ENCODE measurements at regions of chr2 and their contacts with region 1.

Region 1: DNA sequence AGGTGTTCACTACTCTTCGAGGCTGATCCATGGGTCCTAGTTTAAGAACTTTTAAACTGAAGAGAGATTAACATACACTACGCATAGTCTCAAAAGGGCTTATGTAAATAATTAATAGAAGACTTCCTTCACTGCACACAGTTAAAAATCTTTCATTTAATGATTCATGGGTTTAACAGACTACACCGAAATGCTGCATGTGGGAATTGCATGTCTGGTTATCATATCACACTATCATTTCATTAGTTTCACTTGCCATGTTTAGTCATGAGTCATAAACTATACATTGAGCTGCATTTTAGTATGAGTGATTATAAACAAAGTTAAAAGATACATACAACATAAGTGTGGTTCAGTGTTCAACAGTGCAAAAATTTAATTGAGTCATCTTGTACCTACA is 31.2 kb downstream of the GLS start:
- DNase-seq: no peak
- H3K4me3 Mint-ChIP-seq: peak overlapping the region; percentile 9
- H3K27ac Mint-ChIP-seq: peak overlapping the region; percentile 74
- H3K4me1 Mint-ChIP-seq: peaks cover 25% of the 10 kb centered on the region
- H3K27me3 Mint-ChIP-seq: no peaks in the 10 kb centered on the region

Region 2: DNA sequence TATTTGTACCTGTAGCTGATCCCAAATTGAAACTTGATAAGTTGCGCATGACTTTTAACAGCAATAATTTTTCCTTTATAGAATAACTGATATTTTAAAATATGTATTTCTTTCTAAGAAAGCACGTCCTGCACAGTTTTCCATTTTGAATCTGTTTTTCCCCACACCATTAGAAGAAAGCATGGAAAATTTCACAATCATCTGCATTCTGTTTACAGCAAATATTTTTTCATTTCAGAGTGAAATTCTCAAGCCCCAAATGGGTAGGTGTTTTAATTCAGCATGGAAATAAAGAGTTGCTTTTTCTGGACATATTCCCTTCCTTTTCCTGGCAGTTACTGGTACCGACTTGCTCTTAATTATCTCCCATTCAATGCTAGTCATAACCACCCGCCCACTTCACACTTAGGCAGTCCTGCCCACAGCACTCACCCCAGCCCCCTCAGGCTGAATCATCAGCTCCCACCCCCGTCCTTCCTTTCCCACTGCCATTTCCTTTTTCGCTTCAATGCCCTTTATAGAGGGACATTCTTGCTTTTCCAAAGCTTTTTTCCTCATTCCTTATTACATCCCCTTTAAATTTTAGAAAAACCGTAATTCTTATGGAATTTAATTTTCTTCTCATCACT is 120.4 kb before region 1 on chr2:
- intact Hi-C with region 1: loop called (anchors 5 kb)
- DNase-seq: no peak
- H3K4me3 Mint-ChIP-seq: peak overlapping the region; percentile 53
- H3K27ac Mint-ChIP-seq: peak overlapping the region; percentile 86
- H3K4me1 Mint-ChIP-seq: peaks cover 66% of the 10 kb centered on the region
- H3K27me3 Mint-ChIP-seq: no peaks in the 10 kb centered on the region

Region 3: GRCh38 chr2:190843874-190844699 is 67.7 kb before region 1 on chr2:
- intact Hi-C with region 1: loop called (anchors 2 kb)
- DNase-seq: peak; percentile 72
- H3K4me3 Mint-ChIP-seq: peak overlapping the region; percentile 60
- H3K27ac Mint-ChIP-seq: peak overlapping the region; percentile 87
- H3K4me1 Mint-ChIP-seq: peaks cover 25% of the 10 kb centered on the region
- H3K27me3 Mint-ChIP-seq: no peaks in the 10 kb centered on the region

Region 4: DNA sequence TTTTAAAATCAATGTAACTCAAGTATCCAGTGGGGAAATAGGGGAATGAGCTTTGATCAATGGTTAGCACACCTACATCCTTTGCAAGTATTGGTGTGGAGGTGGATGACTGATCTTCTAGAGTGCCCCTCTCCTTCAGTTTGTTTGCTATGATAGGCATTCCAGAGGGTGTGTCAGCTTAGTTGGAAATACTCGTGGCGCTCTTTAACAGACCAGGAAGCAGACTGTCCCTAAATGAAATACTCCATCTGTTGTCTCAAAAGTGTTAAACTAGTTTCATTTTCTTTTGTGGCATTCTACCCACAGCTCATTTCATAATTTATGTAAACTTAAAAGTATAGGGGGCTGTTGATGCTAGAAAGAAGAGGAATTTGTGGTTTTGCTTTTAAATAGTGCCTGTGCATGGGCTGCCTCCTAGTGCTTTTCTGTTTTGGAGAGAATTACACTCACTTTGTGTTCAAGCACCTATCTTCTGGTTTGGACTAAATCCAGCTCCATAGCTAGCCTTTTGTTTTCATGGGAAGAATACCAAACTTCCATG is 36.0 kb after region 1 on chr2:
- intact Hi-C with region 1: loop called (anchors 5 kb)
- DNase-seq: peak; percentile 69
- H3K4me3 Mint-ChIP-seq: peak overlapping the region; percentile 10
- H3K27ac Mint-ChIP-seq: peak overlapping the region; percentile 71
- H3K4me1 Mint-ChIP-seq: peaks cover 10% of the 10 kb centered on the region
- H3K27me3 Mint-ChIP-seq: no peaks in the 10 kb centered on the region

Region 5: DNA sequence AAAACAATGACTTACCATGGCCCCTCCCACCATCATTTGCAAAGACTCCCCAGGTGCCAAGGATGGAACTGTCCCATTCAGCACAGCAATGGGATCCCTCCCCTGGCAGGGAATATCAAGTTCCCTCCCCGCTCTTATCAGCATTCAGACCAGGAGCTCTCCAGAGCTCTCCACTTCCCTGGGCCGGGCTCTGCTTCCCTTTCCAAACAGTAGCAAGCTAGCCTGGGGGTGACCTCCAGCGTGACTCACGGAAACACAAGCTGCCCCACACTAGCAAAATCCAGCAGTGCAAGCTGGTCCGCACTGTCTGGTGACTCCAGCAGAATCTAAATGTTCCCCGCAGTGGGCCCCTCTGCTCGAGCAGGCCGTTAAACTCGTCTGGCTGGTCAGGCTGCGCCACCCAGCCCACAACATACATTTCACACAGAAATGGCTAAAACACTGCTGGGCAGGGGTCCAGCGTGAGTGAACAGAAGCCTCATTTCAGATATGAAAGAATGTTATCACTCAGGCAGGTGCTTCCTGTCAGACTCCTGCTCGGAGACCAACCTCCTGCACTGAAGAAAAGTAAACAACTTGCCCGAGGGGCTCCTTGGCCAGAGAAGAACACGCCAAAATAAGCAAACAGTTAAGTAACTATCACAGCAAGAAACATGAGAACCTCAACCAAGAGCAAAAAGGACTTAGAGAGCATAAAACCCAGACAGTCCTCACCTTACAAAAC is 68.3 kb after region 1 on chr2:
- intact Hi-C with region 1: loop called (anchors 5 kb)
- DNase-seq: no peak
- H3K4me3 Mint-ChIP-seq: no peak overlapping the region
- H3K27ac Mint-ChIP-seq: peak overlapping the region; percentile 90
- H3K4me1 Mint-ChIP-seq: peaks cover 56% of the 10 kb centered on the region
- H3K27me3 Mint-ChIP-seq: no peaks in the 10 kb centered on the region

Region 6: DNA sequence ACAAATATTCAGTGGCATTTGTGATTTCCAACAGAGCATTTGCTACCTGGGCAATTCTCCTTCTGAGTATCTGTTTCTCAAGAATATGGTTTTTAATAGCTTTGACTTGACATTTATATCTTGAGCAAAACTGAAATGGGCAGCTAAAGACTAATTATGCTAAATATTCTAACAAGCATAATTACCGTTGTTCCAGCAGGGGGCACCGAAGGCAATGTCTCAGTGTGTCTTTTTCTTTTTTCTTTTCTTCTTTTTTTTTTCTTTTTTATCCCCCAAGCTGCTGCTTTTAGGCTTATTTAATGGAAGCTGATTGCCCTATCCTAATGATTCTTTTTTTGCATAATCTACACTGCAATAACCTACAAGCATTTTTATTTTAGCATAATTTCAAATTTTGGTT is 627.3 kb after region 1 on chr2:
- intact Hi-C with region 1: no loop called
- DNase-seq: peak; percentile 66
- H3K4me3 Mint-ChIP-seq: no peak overlapping the region
- H3K27ac Mint-ChIP-seq: no peak overlapping the region
- H3K4me1 Mint-ChIP-seq: no peaks in the 10 kb centered on the region
- H3K27me3 Mint-ChIP-seq: peaks cover 8% of the 10 kb centered on the region

Measured in activated CD4-positive, alpha-beta T cell treated with anti-CD3 and anti-CD28 coated beads, Interleukin-2, amount 10 ng/mL, durations not matched to agents 24 days and 14 days (primary cell).